Tibial artery (tissue), 4 donors: ENCODE measurements at regions of chr3 and their contacts with region 1.

Region 1: GRCh38 chr3:66138336-66139313 is 82.2 kb upstream of the SLC25A26 start:
- DNase-seq: peak; percentile 39 to 69
- H3K4me3 ChIP-seq: no peak overlapping the region
- H3K27ac ChIP-seq: no peak overlapping the region
- H3K4me1 ChIP-seq: peaks cover 0 to 7% (median 3%) of the 10 kb centered on the region in 4 donors
- H3K27me3 ChIP-seq: no peaks in the 10 kb centered on the region
- CTCF ChIP-seq: peak; percentile 83 to 87

Region 2: DNA sequence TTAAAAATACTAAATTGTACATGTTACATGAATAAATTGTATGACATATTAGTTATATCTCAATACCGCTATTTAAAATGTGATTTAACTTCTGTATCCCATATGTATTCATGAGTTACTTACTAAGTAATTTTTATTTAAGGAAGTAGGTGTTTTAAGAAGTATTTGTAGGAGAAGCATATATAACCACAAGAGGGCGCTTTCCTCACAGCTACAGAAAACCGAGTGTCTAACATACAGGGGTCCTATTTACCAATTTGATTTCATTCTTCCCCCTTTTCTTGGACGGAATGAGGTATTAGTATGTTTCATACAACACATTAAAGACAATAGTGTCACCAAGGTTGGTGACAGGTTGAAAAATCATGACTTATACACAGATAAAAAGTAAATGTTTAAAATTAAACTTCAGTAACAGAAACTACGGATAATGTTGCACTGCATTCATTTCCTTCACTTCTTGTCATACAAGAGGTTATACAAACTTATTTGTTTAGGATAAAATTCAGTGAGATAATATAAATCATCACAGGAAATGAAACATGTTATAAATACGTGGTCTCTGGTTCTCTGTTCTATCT is 353.5 kb before region 1 on chr3:
- intact Hi-C with region 1: loop called (anchors 5 kb)
- DNase-seq: no peak
- H3K4me3 ChIP-seq: no peak overlapping the region
- H3K27ac ChIP-seq: peak overlapping the region; percentile 31 to 32
- H3K4me1 ChIP-seq: peaks cover 0 to 32% (median 12%) of the 10 kb centered on the region in 4 donors
- H3K27me3 ChIP-seq: no peaks in the 10 kb centered on the region
- CTCF ChIP-seq: peak; percentile 77 to 81

Region 3: DNA sequence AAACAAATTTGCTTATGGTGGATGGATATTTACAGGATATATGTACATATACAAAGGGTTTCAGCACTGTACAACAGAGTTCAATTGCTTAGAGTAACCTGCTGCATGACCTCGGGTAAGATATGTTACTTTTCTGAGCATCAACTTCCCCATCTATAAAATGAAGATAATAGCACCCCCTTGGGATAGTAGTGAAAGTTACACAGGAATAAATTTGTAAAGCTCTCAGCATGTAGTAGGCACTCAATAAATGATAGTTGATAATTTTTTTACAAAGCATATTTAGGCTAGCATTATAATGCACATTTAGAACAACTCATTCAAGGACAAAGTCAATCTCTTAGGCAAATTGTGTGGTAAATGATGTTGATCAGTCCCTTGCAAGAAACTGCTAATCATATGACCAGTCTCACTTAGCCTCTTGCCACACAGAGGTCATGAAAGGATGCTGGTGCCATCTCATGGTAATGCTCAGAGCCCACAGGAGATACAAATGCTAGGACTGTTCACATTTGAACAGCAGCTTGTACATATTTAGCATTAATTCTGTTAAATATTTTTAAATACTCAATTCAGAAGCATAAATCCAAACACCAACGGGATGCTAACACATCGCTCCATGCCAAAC is 223.8 kb before region 1 on chr3:
- intact Hi-C with region 1: loop called (anchors 5 kb)
- DNase-seq: no peak
- H3K4me3 ChIP-seq: no peak overlapping the region
- H3K27ac ChIP-seq: no peak overlapping the region
- H3K4me1 ChIP-seq: peaks cover 0 to 8% (median 2%) of the 10 kb centered on the region in 4 donors
- H3K27me3 ChIP-seq: no peaks in the 10 kb centered on the region
- CTCF ChIP-seq: no peak